ENCODE measurements at regions of chrX and their contacts with region 1.

Region 1: GRCh38 chrX:77910108-77910840 is at the start of gene ATP7A:
- DNase-seq: peak; percentile 92
- H3K4me3 ChIP-seq: peak within 1 kb of the TSS; percentile 77 to 80
- H3K27ac ChIP-seq: peak within 1 kb of the TSS; percentile 69 to 80
- H3K4me1 ChIP-seq: peaks cover 0 to 3% of the 10 kb centered on the region in 2 experiments; a peak in 2 of 4 replicates
- H3K27me3 ChIP-seq: no peaks in the 10 kb centered on the region
- CTCF ChIP-seq: peak; percentile 67
- EP300 ChIP-seq: peak; percentile 11 to 36; a peak in 1 of 4 replicates
- RAD21 ChIP-seq: peak; percentile 72
- polyA plus RNA-seq, gene ATP7A: 1.7 and 2.5 TPM in 2 replicates

Region 2: GRCh38 chrX:77899081-77899828 is 11.0 kb before region 1 on chrX and contains the start of gene COX7B:
- CTCF ChIA-PET with region 1: interaction called, 16 read pairs
- POLR2A ChIA-PET with region 1: interaction called, 8 read pairs
- DNase-seq: peak; percentile 70
- H3K4me3 ChIP-seq: peak within 1 kb of the TSS; percentile 72 to 78
- H3K27ac ChIP-seq: peak within 1 kb of the TSS; percentile 85 to 92
- H3K4me1 ChIP-seq: no peaks in the 10 kb centered on the region; a peak in 1 of 4 replicates
- H3K27me3 ChIP-seq: no peaks in the 10 kb centered on the region
- CTCF ChIP-seq: peak; percentile 66
- EP300 ChIP-seq: no peak
- RAD21 ChIP-seq: peak; percentile 72
- polyA plus RNA-seq, gene COX7B: 1,029 and 1,399 TPM in 2 replicates

Region 3: DNA sequence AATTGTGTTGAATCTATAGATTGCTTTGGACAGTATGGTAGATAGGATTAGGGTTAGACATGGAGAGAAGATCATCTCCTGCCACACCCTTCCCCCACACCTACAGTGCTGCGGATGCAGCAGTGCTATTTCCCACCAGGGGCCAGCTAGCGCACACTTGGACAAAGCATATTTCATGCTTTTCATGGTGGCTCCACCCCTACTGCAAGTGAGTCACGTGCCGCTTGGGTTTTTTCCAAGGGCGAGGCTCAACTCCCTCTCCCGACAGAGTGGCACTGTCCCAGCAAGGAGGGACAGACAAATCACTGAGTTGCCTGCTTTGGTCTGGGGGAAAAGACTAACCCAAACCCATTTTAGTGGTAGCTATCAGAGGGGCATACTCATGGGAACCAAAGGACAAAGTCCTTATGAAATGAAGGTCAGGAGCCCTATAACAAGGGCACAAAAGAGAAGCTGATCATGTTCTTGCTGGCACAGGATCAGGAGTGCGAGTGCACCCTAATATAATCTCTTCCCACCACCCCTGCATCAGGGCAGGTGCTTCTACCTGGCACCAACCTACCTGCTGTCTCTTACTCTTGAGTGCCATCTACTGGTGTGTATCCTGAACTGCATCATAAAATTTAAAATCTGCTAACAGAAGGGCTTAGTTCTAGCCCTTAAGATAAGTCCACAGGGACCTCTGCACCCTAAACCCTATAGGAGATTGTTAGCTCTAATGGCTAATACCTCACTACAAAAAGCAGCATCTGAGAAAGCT is 114.3 kb after region 1 on chrX:
- CTCF ChIA-PET with region 1: interaction called, 18 read pairs
- POLR2A ChIA-PET with region 1: no interaction called
- DNase-seq: peak; percentile 30
- H3K4me3 ChIP-seq: no peak overlapping the region
- H3K27ac ChIP-seq: no peak overlapping the region
- H3K4me1 ChIP-seq: no peaks in the 10 kb centered on the region; a peak in 1 of 4 replicates
- H3K27me3 ChIP-seq: no peaks in the 10 kb centered on the region
- CTCF ChIP-seq: peak; percentile 62
- EP300 ChIP-seq: no peak
- RAD21 ChIP-seq: peak; percentile 68

Region 4: GRCh38 chrX:78029663-78030062 is 119.4 kb after region 1 on chrX:
- CTCF ChIA-PET with region 1: interaction called, 18 read pairs
- POLR2A ChIA-PET with region 1: no interaction called
- DNase-seq: peak; percentile 38
- H3K4me3 ChIP-seq: no peak overlapping the region
- H3K27ac ChIP-seq: no peak overlapping the region
- H3K4me1 ChIP-seq: no peaks in the 10 kb centered on the region
- H3K27me3 ChIP-seq: no peaks in the 10 kb centered on the region
- CTCF ChIP-seq: peak; percentile 72
- EP300 ChIP-seq: no peak
- RAD21 ChIP-seq: peak; percentile 89

Measured in SK-N-SH (cell line).